Pancreas (tissue), 10 donors: ENCODE measurements at regions of chr3 and their contacts with region 1.

Region 1: GRCh38 chr3:126982471-126983175 is at the start of gene PLXNA1:
- DNase-seq: peak; percentile 52 to 90 (median 77)
- ATAC-seq: peak; percentile 84 to 94 (median 88)
- H3K4me3 ChIP-seq: peak within 1 kb of the TSS; percentile 53 to 84 (median 75)
- H3K27ac ChIP-seq: peak within 1 kb of the TSS in 3 of 4 donors; percentile 8 to 72 (median 62)
- H3K4me1 ChIP-seq: peaks cover 0 to 16% (median 11%) of the 10 kb centered on the region in 3 donors
- H3K27me3 ChIP-seq: no peaks in the 10 kb centered on the region
- CTCF ChIP-seq: peak; percentile 84 to 96 (median 90)
- total RNA-seq, gene PLXNA1: 7.4 to 20.0 (median 8.5) TPM

Region 2: DNA sequence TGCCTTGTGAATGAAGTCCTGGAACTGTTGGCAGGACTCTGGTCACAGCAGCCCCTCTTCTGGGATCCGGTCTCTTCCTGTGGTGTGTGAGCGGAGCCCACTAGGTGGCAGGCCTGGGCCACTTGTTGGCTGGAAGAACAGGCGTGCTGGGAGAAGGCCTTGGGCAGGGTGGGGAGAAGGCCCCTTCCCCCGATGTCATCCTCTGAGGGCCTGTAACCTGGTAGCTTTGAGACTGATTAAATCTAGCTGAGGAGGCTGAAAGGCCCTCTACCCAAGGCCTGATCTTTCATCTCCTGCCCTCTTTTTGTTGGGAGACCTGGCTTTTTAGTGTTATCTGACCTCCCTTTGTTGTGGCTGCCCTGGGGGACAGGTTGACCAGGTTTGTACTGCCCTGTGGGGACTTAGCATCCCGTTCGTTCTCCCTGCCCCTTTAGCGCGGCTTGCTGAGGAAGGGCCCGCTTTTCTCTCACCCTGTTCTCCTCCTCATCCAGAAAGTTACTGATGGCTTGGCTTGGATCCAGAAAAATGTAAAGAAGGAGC is 230.2 kb before region 1 on chr3:
- intact Hi-C with region 1: loop called in 1 of 3 experiments (anchors 10 kb)
- DNase-seq: peak; percentile 45 to 86 (median 72)
- ATAC-seq: peak; percentile 69 to 98 (median 94)
- H3K4me3 ChIP-seq: no peak overlapping the region
- H3K27ac ChIP-seq: no peak overlapping the region
- H3K4me1 ChIP-seq: no peaks in the 10 kb centered on the region
- H3K27me3 ChIP-seq: no peaks in the 10 kb centered on the region
- CTCF ChIP-seq: peak; percentile 52 to 75 (median 64)